ENCODE measurements at regions of chr12 and their contacts with region 1.

Region 1: DNA sequence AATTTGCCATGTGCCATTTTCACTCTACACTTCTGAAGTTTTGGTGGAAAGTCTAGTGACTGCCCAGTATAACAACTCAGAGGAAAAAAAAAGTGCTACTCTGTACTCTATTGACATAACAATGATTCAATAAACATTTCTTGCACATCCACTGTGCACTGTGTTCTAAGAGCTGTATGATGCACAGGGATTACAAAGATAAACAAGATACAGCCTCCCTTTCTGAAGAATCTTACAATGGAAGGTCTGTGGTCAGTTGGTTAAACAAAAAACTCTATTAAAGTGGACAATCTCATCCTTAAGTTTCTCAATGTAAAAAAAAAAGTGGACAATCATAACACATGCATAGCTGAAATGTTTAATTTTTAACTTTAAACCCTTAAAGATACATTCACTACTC is 105.7 kb upstream of the RASSF8 start:
- DNase-seq: peak; percentile 95
- ATAC-seq: peak; percentile 91
- H3K4me3 ChIP-seq: no peak overlapping the region
- H3K27ac ChIP-seq: no peak overlapping the region
- H3K4me1 ChIP-seq: peaks cover 9% of the 10 kb centered on the region
- H3K27me3 ChIP-seq: no peaks in the 10 kb centered on the region; the same call in 1 of the 2 replicates
- CTCF ChIP-seq: no peak
- POLR2A ChIP-seq: no peak
- RAD21 ChIP-seq: 0 out of 2 replicates have a peak, but pooled peaks have one; percentile 5

Region 2: DNA sequence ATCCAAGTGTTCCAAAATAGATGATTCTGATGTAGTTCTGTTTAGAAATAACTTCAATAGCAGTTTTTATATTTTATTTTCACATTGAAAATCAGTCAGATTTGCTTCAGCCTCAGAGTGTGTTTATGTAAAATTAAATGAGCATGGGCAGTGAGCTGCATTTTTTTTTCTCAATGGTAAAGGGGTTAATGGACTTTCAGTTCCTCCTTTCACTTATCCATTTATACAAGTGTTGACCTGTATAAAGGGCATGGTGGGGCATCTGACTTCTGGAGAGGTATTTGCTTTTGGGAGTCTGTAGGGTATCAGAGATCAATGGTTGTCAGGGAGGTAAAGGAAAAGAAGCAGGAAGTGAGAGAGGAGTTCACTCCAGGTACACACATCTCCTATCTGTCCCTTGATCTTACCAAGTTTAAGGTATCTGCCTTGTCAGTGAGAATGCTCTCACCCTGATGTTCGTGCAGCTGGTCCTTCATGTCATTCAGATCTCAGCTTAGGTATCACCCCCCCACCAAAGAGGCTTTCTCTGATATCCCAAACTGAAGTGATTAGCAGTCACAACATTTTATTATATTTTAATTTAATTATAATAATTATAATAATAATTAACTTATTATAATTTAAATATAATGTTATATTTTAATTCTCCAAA is 118.1 kb before region 1 on chr12:
- CTCF ChIA-PET with region 1: no interaction called
- POLR2A ChIA-PET with region 1: no interaction called
- dilution Hi-C with region 1: no loop called
- in situ Hi-C with region 1: no loop called
- intact Hi-C with region 1: no loop called
- DNase-seq: no peak
- ATAC-seq: no peak
- H3K4me3 ChIP-seq: no peak overlapping the region
- H3K27ac ChIP-seq: no peak overlapping the region
- H3K4me1 ChIP-seq: peaks cover 4% of the 10 kb centered on the region; the same call in 1 of the 2 replicates
- H3K27me3 ChIP-seq: no peaks in the 10 kb centered on the region
- CTCF ChIP-seq: no peak
- POLR2A ChIP-seq: no peak
- RAD21 ChIP-seq: no peak

Region 3: DNA sequence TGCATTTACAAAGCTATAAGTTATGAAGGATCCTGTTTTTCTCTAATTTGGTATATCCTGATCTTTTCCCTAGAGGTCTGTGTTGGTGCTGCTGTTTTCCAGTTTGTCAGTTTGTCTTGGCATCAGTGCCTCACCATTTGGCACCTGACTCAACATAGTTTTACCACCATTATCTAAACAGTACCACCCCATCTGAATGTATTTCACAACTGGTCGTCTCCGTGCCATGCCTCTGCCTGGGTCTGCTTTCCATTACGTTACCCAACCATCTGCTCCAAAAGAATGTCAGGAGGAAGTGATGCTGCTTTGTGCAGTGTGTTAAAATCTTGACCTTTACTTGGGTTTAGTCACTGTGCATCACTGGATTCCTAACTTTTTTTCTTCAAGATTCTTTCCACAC is 23.6 kb before region 1 on chr12:
- CTCF ChIA-PET with region 1: no interaction called
- POLR2A ChIA-PET with region 1: no interaction called
- dilution Hi-C with region 1: no loop called
- in situ Hi-C with region 1: no loop called
- intact Hi-C with region 1: loop called (anchors 2 kb)
- DNase-seq: peak; percentile 98
- ATAC-seq: peak; percentile 82
- H3K4me3 ChIP-seq: no peak overlapping the region
- H3K27ac ChIP-seq: 0 out of 2 replicates have a peak overlapping the region, but pooled peaks have one; percentile 2
- H3K4me1 ChIP-seq: peaks cover 16% of the 10 kb centered on the region
- H3K27me3 ChIP-seq: no peaks in the 10 kb centered on the region
- CTCF ChIP-seq: 0 out of 2 replicates have a peak, but pooled peaks have one; percentile 10
- POLR2A ChIP-seq: no peak
- RAD21 ChIP-seq: peak; percentile 38

Region 4: DNA sequence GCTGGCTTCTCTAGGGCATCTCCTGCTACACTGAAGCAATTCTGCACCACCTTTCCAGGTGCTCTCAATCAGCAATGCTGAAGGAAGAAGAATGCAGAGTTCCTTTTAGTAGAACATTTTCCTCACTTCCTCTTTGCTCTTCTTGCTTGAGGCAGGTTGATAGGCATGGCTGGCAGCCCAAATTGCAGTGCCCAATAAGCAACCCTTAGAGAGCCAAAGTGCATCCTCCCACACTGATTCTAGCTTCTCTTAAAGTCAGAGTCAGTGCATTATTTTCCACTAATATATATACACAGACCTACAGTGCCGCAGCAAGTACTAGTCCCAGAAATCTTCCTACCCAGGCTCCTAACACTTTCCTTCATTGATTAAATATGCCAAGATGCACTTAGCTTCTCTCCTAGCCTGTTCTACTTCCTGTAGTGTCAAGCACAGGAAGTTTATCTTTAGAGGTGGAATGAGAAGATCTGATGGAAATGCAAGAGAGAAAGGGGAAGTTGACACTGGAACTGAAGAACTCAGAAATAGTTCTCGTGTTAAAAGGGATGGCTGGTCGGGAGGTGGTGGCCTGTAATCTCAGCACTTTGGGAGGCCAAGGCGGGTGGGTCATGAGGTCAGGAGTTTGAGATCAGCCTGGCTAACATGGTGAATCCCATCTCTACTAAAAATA is 475.3 kb after region 1 on chr12:
- CTCF ChIA-PET with region 1: no interaction called
- POLR2A ChIA-PET with region 1: no interaction called
- dilution Hi-C with region 1: no loop called
- in situ Hi-C with region 1: no loop called
- intact Hi-C with region 1: no loop called
- DNase-seq: no peak
- ATAC-seq: no peak
- H3K4me3 ChIP-seq: no peak overlapping the region
- H3K27ac ChIP-seq: no peak overlapping the region
- H3K4me1 ChIP-seq: no peaks in the 10 kb centered on the region
- H3K27me3 ChIP-seq: no peaks in the 10 kb centered on the region; the same call in 1 of the 2 replicates
- CTCF ChIP-seq: no peak
- POLR2A ChIP-seq: no peak
- RAD21 ChIP-seq: no peak

Measured in IMR-90 (cell line).